ENCODE measurements at regions of chr7 and their contacts with region 1.

Region 1: GRCh38 chr7:98841179-98841997 is 28.4 kb downstream of the TMEM130 start:
- DNase-seq: peak; percentile 56
- H3K4me3 ChIP-seq: no peak overlapping the region
- H3K27ac ChIP-seq: no peak overlapping the region
- H3K4me1 ChIP-seq: no peaks in the 10 kb centered on the region
- H3K27me3 ChIP-seq: no peaks in the 10 kb centered on the region
- CTCF ChIP-seq: peak; percentile 93 to 99
- POLR2A ChIP-seq: no peak

Region 2: DNA sequence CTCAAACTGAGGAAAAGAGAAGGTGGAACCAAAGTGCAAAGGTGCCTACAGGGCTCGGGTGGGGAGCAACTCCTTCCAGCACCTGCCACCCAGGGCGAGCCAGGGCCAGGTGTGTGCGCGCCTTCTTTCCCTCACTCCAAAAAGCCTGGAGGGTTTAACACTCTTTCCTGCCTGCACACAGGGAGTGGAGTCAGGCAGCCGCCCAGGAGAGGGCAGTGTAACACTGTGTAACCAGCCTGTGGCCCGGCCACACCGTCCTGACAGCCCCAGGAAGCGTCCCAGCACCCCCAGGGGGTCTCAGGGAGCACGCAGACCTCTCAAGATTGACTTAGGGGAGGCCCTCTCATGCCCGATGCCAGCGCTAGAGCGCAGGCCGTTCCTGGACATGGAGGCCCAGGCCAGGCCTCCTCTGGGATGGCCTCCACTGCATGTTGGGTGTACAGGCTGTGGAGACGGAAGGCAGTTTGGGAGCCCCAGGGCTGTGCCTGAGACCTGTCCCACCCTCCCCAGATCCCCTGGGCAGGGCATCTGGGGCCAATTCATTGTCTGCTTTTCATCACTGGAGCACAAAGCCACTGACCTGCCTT is 546.5 kb before region 1 on chr7:
- CTCF ChIA-PET with region 1: interaction called, 18 read pairs
- POLR2A ChIA-PET with region 1: no interaction called
- dilution Hi-C with region 1: no loop called
- intact Hi-C with region 1: loop called (anchors 10 kb)
- DNase-seq: peak; percentile 32
- H3K4me3 ChIP-seq: no peak overlapping the region
- H3K27ac ChIP-seq: no peak overlapping the region
- H3K4me1 ChIP-seq: no peaks in the 10 kb centered on the region
- H3K27me3 ChIP-seq: no peaks in the 10 kb centered on the region
- CTCF ChIP-seq: peak; percentile 58 to 69
- POLR2A ChIP-seq: peak; percentile 63

Region 3: DNA sequence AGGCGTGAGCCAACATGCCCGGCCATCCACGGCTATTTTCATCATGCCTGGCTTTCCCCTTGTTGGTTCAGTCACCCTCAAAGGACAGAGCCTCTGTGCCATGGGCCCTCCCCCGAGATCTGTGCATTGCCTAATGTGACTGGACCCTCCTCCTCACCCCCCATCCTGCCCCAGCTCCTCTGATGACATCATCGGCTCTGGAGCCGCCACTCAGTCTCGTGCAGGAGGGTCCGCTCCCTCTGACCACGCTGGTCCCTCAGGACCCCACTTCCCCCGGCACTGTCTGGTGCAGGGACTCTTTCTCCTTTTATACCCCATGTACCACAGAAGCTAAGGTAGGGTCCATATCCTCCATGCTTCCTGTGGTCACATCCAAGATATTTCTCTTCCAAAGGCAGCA is 407.3 kb before region 1 on chr7:
- CTCF ChIA-PET with region 1: interaction called, 111 read pairs
- POLR2A ChIA-PET with region 1: no interaction called
- dilution Hi-C with region 1: no loop called
- intact Hi-C with region 1: loop called (anchors 1 kb)
- DNase-seq: no peak
- H3K4me3 ChIP-seq: no peak overlapping the region
- H3K27ac ChIP-seq: no peak overlapping the region
- H3K4me1 ChIP-seq: no peaks in the 10 kb centered on the region
- H3K27me3 ChIP-seq: no peaks in the 10 kb centered on the region
- CTCF ChIP-seq: no peak
- POLR2A ChIP-seq: no peak

Region 4: GRCh38 chr7:98641646-98642500 is 199.5 kb before region 1 on chr7:
- CTCF ChIA-PET with region 1: no interaction called
- POLR2A ChIA-PET with region 1: no interaction called
- dilution Hi-C with region 1: no loop called
- intact Hi-C with region 1: no loop called
- DNase-seq: no peak
- H3K4me3 ChIP-seq: no peak overlapping the region
- H3K27ac ChIP-seq: no peak overlapping the region
- H3K4me1 ChIP-seq: no peaks in the 10 kb centered on the region
- H3K27me3 ChIP-seq: no peaks in the 10 kb centered on the region
- CTCF ChIP-seq: no peak
- POLR2A ChIP-seq: no peak

Region 5: GRCh38 chr7:98816241-98816640 is 25.1 kb before region 1 on chr7:
- CTCF ChIA-PET with region 1: no interaction called
- POLR2A ChIA-PET with region 1: no interaction called
- dilution Hi-C with region 1: no loop called
- intact Hi-C with region 1: no loop called
- DNase-seq: no peak
- H3K4me3 ChIP-seq: no peak overlapping the region
- H3K27ac ChIP-seq: no peak overlapping the region
- H3K4me1 ChIP-seq: no peaks in the 10 kb centered on the region
- H3K27me3 ChIP-seq: no peaks in the 10 kb centered on the region
- CTCF ChIP-seq: no peak
- POLR2A ChIP-seq: no peak

Region 6: DNA sequence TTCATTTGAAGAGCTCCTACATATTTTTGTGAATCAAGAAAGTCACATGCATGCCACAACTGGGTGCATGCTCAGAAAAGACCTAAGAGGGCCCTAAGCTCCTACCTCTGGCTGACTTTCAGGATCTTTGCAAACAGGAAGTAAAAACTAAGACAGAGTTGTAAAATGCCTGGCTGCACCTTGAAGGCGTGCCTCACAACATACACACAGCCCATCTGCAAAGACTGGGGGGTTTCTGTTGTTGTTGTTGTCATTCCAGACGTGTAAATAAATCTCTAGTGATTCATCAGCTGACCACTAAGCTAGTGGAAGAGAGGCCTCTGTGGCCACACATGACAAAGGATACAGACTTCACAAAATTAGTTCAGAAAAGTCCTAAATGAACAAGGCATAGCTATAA is 270.7 kb after region 1 on chr7:
- CTCF ChIA-PET with region 1: no interaction called
- POLR2A ChIA-PET with region 1: no interaction called
- dilution Hi-C with region 1: no loop called
- intact Hi-C with region 1: no loop called
- DNase-seq: no peak
- H3K4me3 ChIP-seq: no peak overlapping the region
- H3K27ac ChIP-seq: no peak overlapping the region
- H3K4me1 ChIP-seq: peaks cover 30% of the 10 kb centered on the region
- H3K27me3 ChIP-seq: no peaks in the 10 kb centered on the region
- CTCF ChIP-seq: no peak
- POLR2A ChIP-seq: no peak

Measured in endothelial cell of umbilical vein (primary cell).